HEK293 (cell line): ENCODE measurements at regions of chr11 and their contacts with region 1.

Region 1: GRCh38 chr11:75625991-75626888 is 42.6 kb downstream of the MAP6 start:
- H3K4me3 ChIP-seq: no peak overlapping the region
- H3K27ac ChIP-seq: no peak overlapping the region
- H3K4me1 ChIP-seq: no peaks in the 10 kb centered on the region
- CTCF ChIP-seq: no peak

Region 2: DNA sequence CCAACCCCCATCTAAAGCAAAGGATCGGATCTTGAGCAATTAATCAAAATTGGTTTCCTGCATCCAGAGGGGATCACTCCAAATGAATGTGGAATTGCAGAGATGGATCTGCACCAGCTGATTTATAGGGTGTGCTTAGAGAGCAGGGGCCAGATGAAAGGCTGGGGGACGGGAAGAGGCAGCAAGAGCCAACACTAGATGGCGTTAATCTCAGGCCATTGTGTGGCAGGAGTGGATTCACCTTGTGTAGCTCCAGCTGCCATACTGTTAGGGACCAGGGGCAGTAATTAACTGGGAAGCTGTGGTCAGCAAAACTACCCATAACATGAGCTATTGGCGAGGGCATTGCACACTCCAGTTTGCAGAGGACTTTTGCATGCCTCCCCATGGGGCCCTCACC is 28.6 kb before region 1 on chr11:
- CTCF ChIA-PET with region 1: interaction called, 10 read pairs
- POLR2A ChIA-PET with region 1: no interaction called
- H3K4me3 ChIP-seq: no peak overlapping the region
- H3K27ac ChIP-seq: no peak overlapping the region
- H3K4me1 ChIP-seq: no peaks in the 10 kb centered on the region
- CTCF ChIP-seq: 0 out of 2 replicates have a peak, but pooled peaks have one; percentile 12